A673 (cell line): ENCODE measurements at regions of chr17 and their contacts with region 1.

Region 1: GRCh38 chr17:57553991-57554825 is 190.9 kb downstream of the CCDC182 start:
- DNase-seq: peak; percentile 92
- H3K4me3 ChIP-seq: no peak overlapping the region
- H3K27ac ChIP-seq: peak overlapping the region; percentile 12
- H3K4me1 ChIP-seq: peaks cover 88% of the 10 kb centered on the region
- H3K27me3 ChIP-seq: no peaks in the 10 kb centered on the region
- CTCF ChIP-seq: no peak

Region 2: DNA sequence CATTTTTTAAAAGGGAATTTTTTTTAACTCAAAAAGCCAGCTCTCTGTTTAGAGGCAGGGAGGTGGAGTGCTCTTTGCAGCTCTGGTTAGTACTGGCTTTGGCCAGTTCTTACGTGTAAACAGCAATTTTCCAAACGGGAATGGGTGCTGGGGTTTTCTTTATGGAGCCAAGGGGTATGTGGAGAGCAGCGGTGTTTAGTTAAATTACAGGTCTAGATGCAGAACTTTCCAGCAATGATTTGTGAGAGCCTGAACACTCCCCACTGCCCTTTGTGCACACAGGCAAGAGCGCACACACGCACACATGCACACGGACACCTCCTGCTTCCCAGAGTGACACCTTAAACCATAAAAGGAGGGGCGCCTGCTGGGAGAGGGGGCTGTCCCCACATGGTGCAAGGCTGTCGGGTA is 157.7 kb before region 1 on chr17:
- CTCF ChIA-PET with region 1: no interaction called
- POLR2A ChIA-PET with region 1: no interaction called
- intact Hi-C with region 1: no loop called
- DNase-seq: no peak
- H3K4me3 ChIP-seq: no peak overlapping the region
- H3K27ac ChIP-seq: no peak overlapping the region
- H3K4me1 ChIP-seq: no peaks in the 10 kb centered on the region
- H3K27me3 ChIP-seq: no peaks in the 10 kb centered on the region
- CTCF ChIP-seq: no peak

Region 3: GRCh38 chr17:58092797-58093385 is 538.7 kb after region 1 on chr17:
- CTCF ChIA-PET with region 1: interaction called, 10 read pairs
- POLR2A ChIA-PET with region 1: no interaction called
- intact Hi-C with region 1: no loop called
- DNase-seq: no peak
- H3K4me3 ChIP-seq: no peak overlapping the region
- H3K27ac ChIP-seq: no peak overlapping the region
- H3K4me1 ChIP-seq: no peaks in the 10 kb centered on the region
- H3K27me3 ChIP-seq: no peaks in the 10 kb centered on the region
- CTCF ChIP-seq: no peak